ENCODE measurements at regions of chr17 and their contacts with region 1.

Region 1: DNA sequence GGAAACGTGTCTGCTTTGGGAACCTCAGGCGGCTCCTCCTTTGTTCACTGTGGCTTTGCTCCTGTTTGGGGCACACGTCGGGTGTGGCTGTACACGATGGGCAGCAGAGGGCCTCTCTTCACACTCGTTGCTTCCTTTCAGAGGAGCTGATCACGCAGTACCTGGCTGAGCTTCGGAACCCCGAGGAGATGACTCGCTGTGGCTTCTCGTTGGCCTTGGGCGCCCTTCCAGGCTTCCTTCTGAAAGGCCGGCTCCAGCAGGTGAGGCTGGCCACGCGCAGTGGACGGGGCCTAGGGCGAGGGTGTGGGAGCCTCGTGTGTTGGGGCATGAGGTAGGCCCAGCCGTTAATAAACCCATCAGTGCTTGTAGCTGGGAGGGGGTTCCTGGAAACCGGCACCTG is 85.0 kb upstream of the ZNF750 start:
- DNase-seq: no peak
- ATAC-seq: no peak
- H3K4me3 ChIP-seq: no peak overlapping the region
- H3K4me3 Mint-ChIP-seq: no peak overlapping the region
- H3K27ac ChIP-seq: no peak overlapping the region
- H3K27ac Mint-ChIP-seq: no peak overlapping the region
- H3K4me1 ChIP-seq: no peaks in the 10 kb centered on the region
- H3K4me1 Mint-ChIP-seq: no peaks in the 10 kb centered on the region
- H3K27me3 ChIP-seq: no peaks in the 10 kb centered on the region
- H3K27me3 Mint-ChIP-seq: no peaks in the 10 kb centered on the region
- CTCF ChIP-seq: no peak

Region 2: DNA sequence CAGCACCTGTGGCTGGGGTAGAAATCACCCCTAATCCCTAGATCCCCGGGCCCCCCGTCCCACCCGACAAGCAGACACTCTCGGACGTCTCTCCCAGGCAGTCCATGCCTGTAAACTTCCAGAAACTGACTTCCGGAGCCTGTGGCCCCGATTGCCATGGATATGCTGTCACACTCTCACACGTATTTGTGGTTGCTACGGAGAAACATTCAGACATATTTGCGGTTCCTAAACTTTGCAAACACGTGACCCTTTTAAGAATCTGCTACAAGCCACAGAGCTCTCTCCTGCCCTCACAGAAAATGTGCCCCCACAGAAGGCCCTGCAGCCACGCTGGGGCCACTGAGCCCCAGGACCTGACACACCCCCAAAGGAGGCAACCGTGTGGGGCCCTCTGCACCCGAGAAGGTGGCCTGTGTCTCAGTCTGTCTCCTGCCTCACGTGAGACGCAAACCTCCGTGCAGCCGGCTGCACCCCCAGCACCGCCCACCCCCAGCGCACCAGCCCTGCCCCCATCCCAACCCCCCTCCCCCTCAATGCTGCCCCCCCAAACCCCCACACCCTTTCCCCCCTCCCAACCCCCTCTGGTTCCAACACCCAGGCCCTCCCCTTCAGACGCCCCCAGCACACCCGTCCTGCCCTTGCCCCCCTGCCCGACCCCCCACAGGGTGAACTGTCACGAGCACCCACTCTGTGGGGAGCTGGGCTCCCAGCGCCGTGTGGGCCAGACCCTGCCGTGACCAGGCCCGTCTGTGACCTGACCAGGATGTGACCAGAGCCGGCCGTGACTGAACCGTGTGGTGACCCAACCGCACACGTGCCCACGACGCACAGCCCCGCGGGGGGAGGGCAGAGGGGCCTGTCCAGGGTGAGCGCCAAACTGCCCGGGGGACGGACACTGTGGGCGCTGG is 88.3 kb after region 1 on chr17:
- CTCF ChIA-PET with region 1: no interaction called
- POLR2A ChIA-PET with region 1: no interaction called
- intact Hi-C with region 1: loop called in 1 of 2 experiments (anchors 10 kb)
- DNase-seq: no peak
- ATAC-seq: no peak
- H3K4me3 ChIP-seq: no peak overlapping the region
- H3K4me3 Mint-ChIP-seq: no peak overlapping the region
- H3K27ac ChIP-seq: no peak overlapping the region
- H3K27ac Mint-ChIP-seq: no peak overlapping the region
- H3K4me1 ChIP-seq: no peaks in the 10 kb centered on the region
- H3K4me1 Mint-ChIP-seq: peaks cover 5% of the 10 kb centered on the region
- H3K27me3 ChIP-seq: no peaks in the 10 kb centered on the region
- H3K27me3 Mint-ChIP-seq: no peaks in the 10 kb centered on the region
- CTCF ChIP-seq: no peak